Activated B cell treated with CpG ODN at 0.5 μM for 24 hours (primary cell): ENCODE measurements at regions of chr14 and their contacts with region 1.

Region 1: DNA sequence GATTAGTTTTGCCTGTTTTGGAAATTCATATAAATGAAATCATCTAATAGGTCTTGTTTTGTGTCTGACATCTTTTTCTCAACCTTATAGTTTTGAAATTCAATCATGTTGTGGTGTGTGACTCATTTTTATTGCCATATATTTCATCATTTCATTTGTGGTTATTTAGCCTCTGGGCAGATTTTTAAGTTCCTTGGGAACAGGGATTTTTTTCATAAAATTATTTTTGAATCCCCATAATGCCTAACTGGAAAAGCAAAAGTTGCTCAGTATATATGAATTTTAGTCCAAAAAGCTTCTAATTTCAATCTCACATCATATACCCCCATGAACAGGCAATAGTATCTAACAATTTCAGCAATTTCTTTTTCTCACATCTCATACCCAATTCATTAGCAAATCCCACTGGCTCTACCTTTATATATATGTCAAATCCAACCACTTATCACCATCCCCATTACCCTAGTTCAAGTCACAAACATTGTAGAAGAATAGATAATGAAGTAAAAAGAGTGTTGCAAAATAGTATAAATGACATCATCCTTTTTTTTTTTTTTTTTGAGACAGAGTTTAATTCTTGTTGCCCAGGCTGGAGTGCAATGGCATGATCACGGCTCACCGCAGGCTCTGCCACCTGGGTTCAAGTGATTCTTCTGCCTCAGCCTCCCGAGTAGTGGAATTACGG is 2.6 kb upstream of the OR6J1 start:
- DNase-seq: no peak
- ATAC-seq: no peak
- H3K4me3 Mint-ChIP-seq: no peak overlapping the region
- H3K27ac Mint-ChIP-seq: no peak overlapping the region
- H3K4me1 Mint-ChIP-seq: no peaks in the 10 kb centered on the region
- H3K27me3 Mint-ChIP-seq: no peaks in the 10 kb centered on the region
- CTCF ChIP-seq: no peak

Region 2: DNA sequence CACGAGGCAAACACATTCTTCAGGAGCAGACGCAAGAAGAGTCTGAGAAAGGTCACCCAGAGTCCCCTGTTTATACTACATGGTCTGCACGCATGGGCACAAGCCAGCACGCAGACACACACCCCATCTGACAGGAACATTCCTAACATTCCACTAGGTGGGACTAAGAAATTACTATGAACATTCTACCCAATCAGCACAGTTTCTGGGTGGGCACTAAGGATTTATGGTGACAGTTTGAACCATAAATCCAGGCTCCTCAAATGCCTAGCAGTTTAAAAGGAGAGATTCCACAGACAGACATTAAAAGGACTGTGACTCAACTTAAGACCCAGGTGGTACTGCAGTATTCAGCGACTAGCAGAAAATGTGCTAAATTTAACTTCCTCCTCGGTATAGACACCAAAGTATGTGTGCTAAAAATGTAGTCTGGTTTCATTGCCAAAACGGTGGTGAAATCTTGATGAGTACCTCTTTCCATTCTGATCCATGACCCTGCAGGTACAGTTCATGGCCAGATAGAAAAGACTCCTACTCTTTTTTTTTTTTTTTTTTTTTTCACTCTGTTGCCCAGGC is 32.4 kb before region 1 on chr14:
- CTCF ChIA-PET with region 1: no interaction called
- POLR2A ChIA-PET with region 1: no interaction called
- intact Hi-C with region 1: loop called (anchors 5 kb)
- DNase-seq: no peak
- ATAC-seq: no peak
- H3K4me3 Mint-ChIP-seq: no peak overlapping the region
- H3K27ac Mint-ChIP-seq: no peak overlapping the region
- H3K4me1 Mint-ChIP-seq: no peaks in the 10 kb centered on the region
- H3K27me3 Mint-ChIP-seq: no peaks in the 10 kb centered on the region
- CTCF ChIP-seq: no peak

Region 3: GRCh38 chr14:22689186-22689585 is 42.5 kb after region 1 on chr14:
- CTCF ChIA-PET with region 1: no interaction called
- POLR2A ChIA-PET with region 1: no interaction called
- intact Hi-C with region 1: no loop called
- DNase-seq: no peak
- ATAC-seq: no peak
- H3K4me3 Mint-ChIP-seq: no peak overlapping the region
- H3K27ac Mint-ChIP-seq: no peak overlapping the region
- H3K4me1 Mint-ChIP-seq: no peaks in the 10 kb centered on the region
- H3K27me3 Mint-ChIP-seq: peaks cover 41% of the 10 kb centered on the region
- CTCF ChIP-seq: no peak

Region 4: GRCh38 chr14:22939684-22940083 is 293.0 kb after region 1 on chr14:
- CTCF ChIA-PET with region 1: no interaction called
- POLR2A ChIA-PET with region 1: no interaction called
- intact Hi-C with region 1: no loop called
- DNase-seq: no peak
- ATAC-seq: no peak
- H3K4me3 Mint-ChIP-seq: no peak overlapping the region
- H3K27ac Mint-ChIP-seq: no peak overlapping the region
- H3K4me1 Mint-ChIP-seq: no peaks in the 10 kb centered on the region
- H3K27me3 Mint-ChIP-seq: no peaks in the 10 kb centered on the region
- CTCF ChIP-seq: no peak